CD8-positive, alpha-beta memory T cell (primary cell): ENCODE measurements at regions of chr1 and their contacts with region 1.

Region 1: DNA sequence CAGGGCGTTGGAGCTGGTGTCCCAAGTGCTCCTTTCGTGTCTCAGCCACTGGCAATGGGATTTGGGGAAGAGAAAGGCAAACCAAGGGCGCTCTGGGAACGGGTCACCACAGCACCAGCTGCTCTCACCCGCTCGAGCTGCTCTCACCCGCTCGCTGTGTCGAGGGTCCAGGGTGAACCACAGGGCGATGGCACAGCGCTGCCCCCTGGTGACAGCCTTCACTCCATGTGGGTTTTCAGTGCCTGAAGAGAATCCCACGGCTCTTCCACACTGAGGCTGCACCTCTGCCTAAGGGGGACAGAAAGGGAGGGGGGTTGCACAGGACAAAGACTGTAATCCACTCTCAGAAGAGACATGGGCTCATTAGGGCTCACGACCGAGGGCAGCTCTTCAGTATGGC is 7.1 kb upstream of the CLDN19 start:
- DNase-seq: peak; percentile 16 to 63 (median 33)
- H3K4me3 ChIP-seq: no peak overlapping the region
- H3K4me3 Mint-ChIP-seq: no peak overlapping the region
- H3K27ac ChIP-seq: no peak overlapping the region
- H3K27ac Mint-ChIP-seq: peak overlapping the region in 1 of 8 donors; percentile 65
- H3K4me1 ChIP-seq: no peaks in the 10 kb centered on the region
- H3K4me1 Mint-ChIP-seq: no peaks in the 10 kb centered on the region
- H3K27me3 ChIP-seq: no peaks in the 10 kb centered on the region
- H3K27me3 Mint-ChIP-seq: no peaks in the 10 kb centered on the region

Region 2: DNA sequence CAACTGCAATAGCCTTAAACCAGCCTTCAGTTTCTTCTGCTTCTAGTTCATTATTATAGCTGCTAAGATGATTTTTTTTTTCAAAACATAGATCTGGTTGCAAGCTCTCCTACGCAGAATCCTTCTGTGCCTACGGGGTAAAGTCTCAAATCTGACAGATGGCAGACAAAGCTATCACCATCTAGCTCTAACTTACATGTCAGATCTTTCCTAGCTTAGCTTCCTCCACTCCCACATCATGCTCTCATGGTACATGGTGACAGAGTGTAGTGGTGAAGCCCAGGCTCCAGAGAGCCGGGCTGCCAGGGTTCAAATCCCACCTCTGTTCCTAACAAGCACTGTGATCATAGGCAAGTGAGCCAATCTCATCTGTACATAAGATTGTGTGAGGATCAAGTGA is 618.2 kb before region 1 on chr1:
- CTCF ChIA-PET with region 1: no interaction called
- POLR2A ChIA-PET with region 1: no interaction called
- DNase-seq: no peak
- H3K4me3 ChIP-seq: no peak overlapping the region
- H3K4me3 Mint-ChIP-seq: no peak overlapping the region
- H3K27ac ChIP-seq: no peak overlapping the region
- H3K27ac Mint-ChIP-seq: no peak overlapping the region
- H3K4me1 ChIP-seq: no peaks in the 10 kb centered on the region
- H3K4me1 Mint-ChIP-seq: no peaks in the 10 kb centered on the region
- H3K27me3 ChIP-seq: no peaks in the 10 kb centered on the region
- H3K27me3 Mint-ChIP-seq: peaks cover 14 to 15% of the 10 kb centered on the region in 2 donors

Region 3: DNA sequence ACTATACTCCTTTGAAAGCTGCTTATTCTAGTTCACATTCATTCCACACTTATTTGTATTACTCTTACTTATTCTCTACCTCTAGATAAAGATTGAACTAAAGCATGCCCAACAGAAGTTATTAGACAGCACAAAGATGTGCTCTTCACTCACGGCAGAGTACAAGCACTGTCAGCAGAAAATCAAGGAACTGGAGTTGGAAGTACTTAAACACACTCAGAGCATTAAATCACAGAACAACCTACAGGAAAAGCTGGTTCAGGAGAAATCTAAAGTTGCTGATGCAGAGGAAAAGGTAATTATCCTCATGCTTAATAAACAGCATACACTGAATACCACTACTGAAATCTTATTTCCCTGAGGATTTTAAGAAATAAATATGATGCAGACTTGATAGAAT is 170.2 kb before region 1 on chr1:
- CTCF ChIA-PET with region 1: interaction called, 10 read pairs
- POLR2A ChIA-PET with region 1: no interaction called
- DNase-seq: no peak
- H3K4me3 ChIP-seq: no peak overlapping the region
- H3K4me3 Mint-ChIP-seq: no peak overlapping the region
- H3K27ac ChIP-seq: no peak overlapping the region
- H3K27ac Mint-ChIP-seq: no peak overlapping the region
- H3K4me1 ChIP-seq: no peaks in the 10 kb centered on the region
- H3K4me1 Mint-ChIP-seq: no peaks in the 10 kb centered on the region
- H3K27me3 ChIP-seq: no peaks in the 10 kb centered on the region
- H3K27me3 Mint-ChIP-seq: no peaks in the 10 kb centered on the region